Endothelial cell of umbilical vein (primary cell): ENCODE measurements at regions of chr11 and their contacts with region 1.

Region 1: DNA sequence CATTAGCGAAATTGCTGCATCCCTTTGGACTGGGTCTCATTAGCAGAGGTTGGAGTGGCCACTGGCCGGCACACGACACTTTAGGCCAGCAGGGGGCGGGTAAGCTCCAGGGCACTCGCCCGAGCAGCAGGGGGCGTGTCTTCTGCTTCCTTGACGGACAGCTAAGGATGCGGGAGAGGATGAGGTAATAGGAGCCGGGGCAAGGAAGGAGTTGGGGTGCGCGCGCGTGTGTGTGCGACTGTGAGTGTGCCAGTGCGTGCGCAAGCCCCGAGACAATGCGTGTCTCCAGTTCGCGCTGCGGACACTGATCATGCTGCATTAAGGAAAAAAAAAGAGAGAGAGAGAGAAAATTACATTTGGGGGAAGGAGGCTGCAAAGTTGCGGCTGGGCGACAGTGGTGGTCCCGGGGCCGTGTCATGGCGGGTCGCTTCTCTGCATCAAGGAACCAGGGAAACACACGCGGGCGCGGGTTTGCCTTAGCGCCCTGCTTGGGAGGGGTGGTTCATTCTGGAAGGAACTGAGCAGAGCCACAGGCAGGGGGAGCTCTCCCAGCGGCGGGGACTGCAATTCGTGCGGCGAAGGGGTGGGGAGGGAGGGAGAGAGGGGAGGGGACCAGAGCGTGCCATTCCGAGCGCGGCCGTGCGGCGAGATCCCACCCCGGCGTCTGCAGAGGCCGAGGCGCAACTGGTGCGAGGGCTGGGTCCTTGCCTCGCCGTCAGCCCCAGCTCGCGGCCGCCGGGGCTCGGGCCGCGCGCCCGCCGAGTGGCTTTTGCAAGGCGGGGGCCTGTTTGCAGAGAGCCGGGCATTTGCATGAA is at the start of gene DTX4:
- DNase-seq: peak; percentile 87
- H3K4me3 ChIP-seq: peak within 1 kb of the TSS in 2 of 3 experiments; percentile 35 to 36
- H3K27ac ChIP-seq: no peak within 1 kb of the TSS
- H3K4me1 ChIP-seq: peaks cover 8% of the 10 kb centered on the region
- H3K27me3 ChIP-seq: peaks cover 37 to 42% of the 10 kb centered on the region in 2 experiments
- CTCF ChIP-seq: peak; percentile 92 to 96
- POLR2A ChIP-seq: no peak
- total RNA-seq, gene DTX4: 0.51 and 0.91 TPM in 2 replicates

Region 2: GRCh38 chr11:59135648-59136461 is 35.9 kb before region 1 on chr11:
- CTCF ChIA-PET with region 1: interaction called, 13 read pairs
- POLR2A ChIA-PET with region 1: no interaction called
- dilution Hi-C with region 1: no loop called
- intact Hi-C with region 1: no loop called
- DNase-seq: peak; percentile 82
- H3K4me3 ChIP-seq: no peak overlapping the region
- H3K27ac ChIP-seq: no peak overlapping the region
- H3K4me1 ChIP-seq: no peaks in the 10 kb centered on the region
- H3K27me3 ChIP-seq: no peaks in the 10 kb centered on the region
- CTCF ChIP-seq: peak; percentile 98 to 99
- POLR2A ChIP-seq: no peak

Region 3: DNA sequence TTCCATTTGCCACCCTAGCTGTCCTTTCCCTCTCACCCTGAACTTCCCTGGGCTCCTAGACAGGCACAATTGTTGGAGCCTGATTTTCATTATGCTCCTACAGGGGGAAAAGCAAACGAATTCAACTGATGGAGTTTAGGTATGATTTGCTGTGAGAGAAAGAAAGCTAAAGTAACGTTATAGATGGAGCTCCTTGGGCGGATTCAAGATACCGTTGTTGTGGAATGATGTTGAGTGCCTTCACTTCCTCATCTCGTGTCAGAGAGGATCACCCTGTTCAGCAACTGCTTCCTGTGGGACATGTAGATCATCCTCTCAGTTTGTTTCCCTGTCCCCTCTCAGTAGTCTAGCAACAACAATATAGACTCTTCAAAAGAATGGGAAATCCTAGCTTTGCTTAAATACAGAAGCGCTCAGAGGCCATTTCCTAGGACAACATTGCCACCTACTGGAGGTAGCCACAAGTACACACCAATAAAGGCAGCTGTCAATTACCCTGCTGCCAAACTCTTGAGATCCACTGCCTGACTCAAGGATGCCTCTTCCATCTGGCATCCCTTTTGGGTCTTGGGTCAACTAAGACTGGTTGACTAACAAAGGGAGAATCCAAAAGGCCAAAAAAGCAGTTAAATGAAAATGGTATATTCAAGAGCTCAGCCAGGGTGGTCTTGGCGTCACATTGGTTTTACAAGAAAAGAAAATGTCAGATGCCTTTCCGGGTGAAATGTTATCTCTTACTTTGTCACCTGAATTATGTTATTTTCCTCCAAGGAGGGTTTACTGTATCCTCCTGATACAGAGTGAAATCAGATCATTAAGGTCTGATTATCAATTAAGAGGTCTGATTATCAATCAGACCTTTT is 13.3 kb before region 1 on chr11:
- CTCF ChIA-PET with region 1: interaction called, 86 read pairs
- POLR2A ChIA-PET with region 1: no interaction called
- dilution Hi-C with region 1: no loop called
- intact Hi-C with region 1: no loop called
- DNase-seq: peak; percentile 76
- H3K4me3 ChIP-seq: no peak overlapping the region
- H3K27ac ChIP-seq: no peak overlapping the region
- H3K4me1 ChIP-seq: peaks cover 2% of the 10 kb centered on the region
- H3K27me3 ChIP-seq: peaks cover 6 to 7% of the 10 kb centered on the region in 2 experiments
- CTCF ChIP-seq: peak; percentile 72 to 82
- POLR2A ChIP-seq: no peak

Region 4: DNA sequence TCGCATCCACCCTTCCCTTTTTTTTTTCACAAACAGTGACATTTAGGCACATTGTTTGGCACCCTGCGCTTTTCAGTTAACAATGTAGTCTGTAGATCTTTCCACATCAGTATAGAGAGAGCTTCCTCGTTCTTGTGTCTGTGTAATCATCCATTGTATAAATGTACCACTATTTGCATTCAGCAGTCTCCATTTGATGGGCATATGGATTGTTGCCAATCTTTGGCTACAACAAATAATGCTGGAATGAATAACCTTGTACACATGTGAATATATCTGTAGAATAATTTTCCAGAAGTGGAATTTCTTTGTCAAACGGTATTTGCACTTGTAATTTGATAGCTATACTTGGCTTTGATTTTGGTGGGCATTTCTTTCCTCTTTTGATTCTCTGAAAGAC is 23.9 kb after region 1 on chr11:
- CTCF ChIA-PET with region 1: interaction called, 143 read pairs
- POLR2A ChIA-PET with region 1: no interaction called
- dilution Hi-C with region 1: no loop called
- intact Hi-C with region 1: no loop called
- DNase-seq: no peak
- H3K4me3 ChIP-seq: no peak overlapping the region
- H3K27ac ChIP-seq: no peak overlapping the region
- H3K4me1 ChIP-seq: no peaks in the 10 kb centered on the region
- H3K27me3 ChIP-seq: peaks cover 3 to 6% of the 10 kb centered on the region in 2 experiments
- CTCF ChIP-seq: no peak
- POLR2A ChIP-seq: no peak

Region 5: GRCh38 chr11:59224351-59224928 is 52.7 kb after region 1 on chr11:
- CTCF ChIA-PET with region 1: interaction called, 11 read pairs
- POLR2A ChIA-PET with region 1: no interaction called
- dilution Hi-C with region 1: no loop called
- intact Hi-C with region 1: no loop called
- DNase-seq: peak; percentile 25
- H3K4me3 ChIP-seq: no peak overlapping the region
- H3K27ac ChIP-seq: no peak overlapping the region
- H3K4me1 ChIP-seq: no peaks in the 10 kb centered on the region
- H3K27me3 ChIP-seq: no peaks in the 10 kb centered on the region
- CTCF ChIP-seq: no peak
- POLR2A ChIP-seq: no peak

Region 6: DNA sequence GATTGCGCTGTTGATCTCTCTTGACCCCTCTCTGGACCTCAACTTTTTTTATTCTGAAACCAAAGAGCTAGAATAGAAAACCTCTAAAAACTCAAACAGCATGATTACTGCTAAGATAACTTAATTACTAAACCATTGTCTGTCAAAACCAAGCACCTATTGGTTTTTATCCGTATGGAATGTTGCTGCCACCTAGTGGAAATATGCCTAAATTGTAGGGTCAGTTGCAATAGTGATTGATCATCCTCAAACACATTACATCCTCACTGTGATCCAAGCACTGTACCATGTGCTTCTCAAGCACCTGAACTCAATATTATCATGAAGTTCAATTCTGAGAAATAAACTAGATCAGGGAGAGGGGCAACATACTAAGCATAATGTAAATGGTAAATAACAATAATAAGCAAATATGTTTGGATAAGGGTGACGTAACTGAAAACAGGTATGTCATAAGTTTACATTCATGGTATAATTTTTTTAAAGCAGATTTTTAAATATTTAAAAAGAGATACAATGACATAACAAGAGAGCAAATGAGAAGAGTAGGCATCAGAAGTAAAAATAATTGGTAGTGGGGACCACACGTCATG is 258.3 kb after region 1 on chr11:
- CTCF ChIA-PET with region 1: interaction called, 17 read pairs
- POLR2A ChIA-PET with region 1: no interaction called
- dilution Hi-C with region 1: no loop called
- intact Hi-C with region 1: loop called (anchors 1 kb)
- DNase-seq: peak; percentile 54
- H3K4me3 ChIP-seq: no peak overlapping the region
- H3K27ac ChIP-seq: no peak overlapping the region
- H3K4me1 ChIP-seq: no peaks in the 10 kb centered on the region
- H3K27me3 ChIP-seq: peaks cover 0 to 5% of the 10 kb centered on the region in 2 experiments
- CTCF ChIP-seq: peak; percentile 60 to 66
- POLR2A ChIP-seq: no peak